A673 (cell line): ENCODE measurements at regions of chr1 and their contacts with region 1.

Region 1: DNA sequence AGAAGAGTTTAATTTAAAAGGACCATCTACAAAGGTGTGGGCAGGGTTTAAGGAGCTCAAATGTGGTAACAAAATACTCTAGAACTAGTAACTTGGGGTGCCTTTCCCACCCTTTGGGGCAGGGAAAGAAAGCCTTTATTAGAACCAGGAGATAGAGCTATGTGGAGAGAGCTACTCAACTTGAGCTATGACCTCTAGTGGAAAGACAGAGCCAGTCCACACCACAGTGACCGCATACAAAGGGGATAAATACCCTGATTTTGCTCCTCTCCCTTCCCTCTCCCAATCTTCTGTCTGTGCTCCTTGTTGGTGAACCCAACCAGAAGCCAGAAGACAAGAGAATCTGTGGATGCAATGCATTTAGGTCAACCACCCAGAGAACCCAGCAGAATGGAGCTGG is 54.4 kb upstream of the JAK1 start:
- DNase-seq: no peak
- H3K4me3 ChIP-seq: no peak overlapping the region
- H3K27ac ChIP-seq: no peak overlapping the region
- H3K4me1 ChIP-seq: peaks cover 19% of the 10 kb centered on the region
- H3K27me3 ChIP-seq: no peaks in the 10 kb centered on the region
- CTCF ChIP-seq: 0 out of 2 replicates have a peak, but pooled peaks have one; percentile 22

Region 2: GRCh38 chr1:64744492-64745180 is 276.1 kb before region 1 on chr1 and contains the start of gene RAVER2:
- CTCF ChIA-PET with region 1: no interaction called
- POLR2A ChIA-PET with region 1: no interaction called
- intact Hi-C with region 1: no loop called
- DNase-seq: peak; percentile 91
- H3K4me3 ChIP-seq: peak within 1 kb of the TSS; percentile 98
- H3K27ac ChIP-seq: peak within 1 kb of the TSS; percentile 93
- H3K4me1 ChIP-seq: peaks cover 28% of the 10 kb centered on the region
- H3K27me3 ChIP-seq: no peaks in the 10 kb centered on the region
- CTCF ChIP-seq: peak; percentile 72
- total RNA-seq, gene RAVER2: 34.1 and 36.5 TPM in 2 replicates

Region 3: DNA sequence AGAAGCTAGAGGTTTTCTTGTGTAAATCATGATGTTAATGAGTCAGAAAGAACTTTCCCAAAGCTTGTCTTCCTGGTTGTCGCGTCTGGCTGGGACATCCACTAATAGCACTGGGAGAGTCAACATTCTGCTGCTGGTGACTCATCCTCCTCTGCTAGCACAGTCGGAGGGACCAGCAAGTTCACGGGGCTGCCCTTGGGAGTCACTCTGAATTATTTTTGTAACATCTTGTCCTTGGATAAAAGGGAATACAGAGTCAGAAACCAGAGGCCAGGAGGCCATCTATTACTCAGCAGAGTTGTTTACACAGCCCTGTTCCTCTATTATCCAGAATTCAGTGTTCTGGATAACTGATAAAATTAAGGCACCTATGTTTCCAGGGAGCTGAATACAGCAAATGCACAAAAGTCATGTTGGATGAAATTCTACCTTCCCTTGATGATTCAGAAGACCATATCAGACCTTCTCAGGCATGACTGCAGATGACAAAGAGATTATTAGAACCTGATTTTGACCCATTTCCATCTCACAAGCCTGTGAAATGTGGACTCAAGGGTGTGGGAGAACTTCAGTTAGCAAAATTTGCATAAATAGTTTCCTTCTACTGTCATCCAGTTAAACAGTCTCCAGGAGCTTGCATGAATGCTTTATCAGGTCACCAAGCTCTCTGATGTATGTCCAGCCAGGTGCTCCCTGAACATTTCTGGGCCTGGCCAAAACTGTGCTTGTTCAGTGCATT is 122.5 kb before region 1 on chr1:
- CTCF ChIA-PET with region 1: no interaction called
- POLR2A ChIA-PET with region 1: no interaction called
- intact Hi-C with region 1: loop called (anchors 10 kb)
- DNase-seq: peak; percentile 90
- H3K4me3 ChIP-seq: no peak overlapping the region
- H3K27ac ChIP-seq: peak overlapping the region; percentile 41
- H3K4me1 ChIP-seq: peaks cover 90% of the 10 kb centered on the region
- H3K27me3 ChIP-seq: no peaks in the 10 kb centered on the region
- CTCF ChIP-seq: no peak